ENCODE measurements at regions of chr4 and their contacts with region 1.

Region 1: DNA sequence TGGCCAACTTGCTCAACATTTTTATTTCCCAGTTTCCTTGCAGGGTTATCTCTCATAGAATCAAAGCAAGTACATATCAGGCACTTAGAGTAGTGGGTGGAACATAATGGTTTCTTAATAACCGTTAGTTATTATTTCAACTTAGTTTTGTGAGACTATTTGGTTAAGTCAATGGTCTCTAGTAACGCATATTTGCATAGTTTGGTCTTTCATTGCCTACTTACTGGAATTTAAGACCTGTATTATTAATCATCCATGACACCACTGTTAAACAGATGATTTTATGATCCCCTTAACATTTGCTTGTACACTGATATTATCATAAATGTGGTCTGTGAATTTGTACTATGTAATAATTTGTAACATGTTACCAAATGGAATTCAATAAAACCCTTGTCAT is 70.9 kb upstream of the SMIM31 start:
- DNase-seq: no peak
- ATAC-seq: no peak
- H3K4me3 ChIP-seq: no peak overlapping the region
- H3K4me3 Mint-ChIP-seq: no peak overlapping the region
- H3K27ac ChIP-seq: no peak overlapping the region
- H3K27ac Mint-ChIP-seq: no peak overlapping the region
- H3K4me1 ChIP-seq: no peaks in the 10 kb centered on the region
- H3K4me1 Mint-ChIP-seq: no peaks in the 10 kb centered on the region
- H3K27me3 ChIP-seq: no peaks in the 10 kb centered on the region
- H3K27me3 Mint-ChIP-seq: peaks cover 0 to 15% (median 5%) of the 10 kb centered on the region in 5 donors

Region 2: DNA sequence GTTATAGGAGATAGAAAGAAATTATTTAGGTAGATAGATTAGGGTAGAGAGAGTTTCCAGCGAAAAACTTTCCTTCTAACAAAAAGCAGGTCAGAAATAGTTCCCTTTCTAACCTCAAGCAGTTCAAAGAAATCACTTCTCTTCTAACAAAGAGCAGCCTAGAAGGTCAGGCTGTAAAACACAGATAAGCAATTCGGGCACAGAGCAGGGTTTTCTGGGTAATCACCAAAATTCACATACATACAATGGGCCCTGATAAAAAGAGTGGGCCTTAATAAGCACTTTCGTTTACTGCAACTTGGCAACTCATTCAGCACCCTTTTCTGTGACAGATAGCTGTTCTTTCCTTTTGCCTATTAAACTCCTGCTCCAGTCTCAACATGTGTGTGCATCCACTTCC is 1503.0 kb before region 1 on chr4:
- CTCF ChIA-PET with region 1: no interaction called
- POLR2A ChIA-PET with region 1: no interaction called
- intact Hi-C with region 1: loop called in 1 of 2 experiments (anchors 5 kb)
- DNase-seq: no peak
- ATAC-seq: no peak
- H3K4me3 ChIP-seq: no peak overlapping the region
- H3K4me3 Mint-ChIP-seq: no peak overlapping the region
- H3K27ac ChIP-seq: no peak overlapping the region
- H3K27ac Mint-ChIP-seq: no peak overlapping the region
- H3K4me1 ChIP-seq: no peaks in the 10 kb centered on the region
- H3K4me1 Mint-ChIP-seq: peaks cover 0 to 3% (median 0%) of the 10 kb centered on the region in 7 donors
- H3K27me3 ChIP-seq: no peaks in the 10 kb centered on the region
- H3K27me3 Mint-ChIP-seq: peaks cover 0 to 21% (median 10%) of the 10 kb centered on the region in 5 donors